ENCODE measurements at regions of chr3 and their contacts with region 1.

Region 1: DNA sequence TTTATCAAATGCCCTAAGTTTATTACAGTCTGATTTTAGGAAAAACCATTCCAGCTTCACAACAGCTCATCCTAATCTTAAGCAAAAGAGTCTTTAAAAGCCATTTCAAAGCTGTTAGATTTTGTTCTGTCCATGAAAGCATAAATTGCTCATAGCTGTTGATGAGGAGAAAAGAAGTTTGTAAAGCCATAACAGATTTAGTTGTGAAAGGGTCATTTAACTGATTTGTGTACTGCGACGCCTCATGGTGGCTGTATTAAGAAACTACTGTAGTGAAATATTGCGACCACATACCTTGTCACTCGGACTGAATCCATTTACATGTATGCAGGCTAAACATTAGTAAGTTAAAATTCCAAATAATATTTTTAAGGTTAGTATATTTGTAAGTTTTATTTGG is 20.9 kb downstream of the BBX start:
- DNase-seq: no peak
- ATAC-seq: peak; percentile 36
- H3K4me3 ChIP-seq: no peak overlapping the region
- H3K4me3 Mint-ChIP-seq: no peak overlapping the region
- H3K27ac ChIP-seq: no peak overlapping the region
- H3K27ac Mint-ChIP-seq: no peak overlapping the region
- H3K4me1 ChIP-seq: peaks cover 0 to 3% of the 10 kb centered on the region in 2 donors
- H3K4me1 Mint-ChIP-seq: peaks cover 5 to 65% (median 51%) of the 10 kb centered on the region in 7 donors
- H3K27me3 ChIP-seq: no peaks in the 10 kb centered on the region
- H3K27me3 Mint-ChIP-seq: no peaks in the 10 kb centered on the region

Region 2: GRCh38 chr3:107271787-107272387 is 271.8 kb before region 1 on chr3:
- CTCF ChIA-PET with region 1: interaction called, 7 read pairs
- POLR2A ChIA-PET with region 1: no interaction called
- intact Hi-C with region 1: loop called (anchors 1 to 5 kb)
- DNase-seq: peak in 6 of 9 donors; percentile 1 to 43 (median 20)
- ATAC-seq: peak; percentile 64
- H3K4me3 ChIP-seq: no peak overlapping the region
- H3K4me3 Mint-ChIP-seq: no peak overlapping the region
- H3K27ac ChIP-seq: no peak overlapping the region
- H3K27ac Mint-ChIP-seq: no peak overlapping the region
- H3K4me1 ChIP-seq: no peaks in the 10 kb centered on the region
- H3K4me1 Mint-ChIP-seq: peaks cover 0 to 2% (median 0%) of the 10 kb centered on the region in 7 donors
- H3K27me3 ChIP-seq: peaks cover 0 to 3% of the 10 kb centered on the region in 2 donors
- H3K27me3 Mint-ChIP-seq: peaks cover 6 to 42% (median 25%) of the 10 kb centered on the region in 5 donors

Region 3: GRCh38 chr3:107283948-107284347 is 259.7 kb before region 1 on chr3:
- CTCF ChIA-PET with region 1: no interaction called
- POLR2A ChIA-PET with region 1: no interaction called
- intact Hi-C with region 1: no loop called
- DNase-seq: no peak
- ATAC-seq: no peak
- H3K4me3 ChIP-seq: no peak overlapping the region
- H3K4me3 Mint-ChIP-seq: no peak overlapping the region
- H3K27ac ChIP-seq: no peak overlapping the region
- H3K27ac Mint-ChIP-seq: no peak overlapping the region
- H3K4me1 ChIP-seq: no peaks in the 10 kb centered on the region
- H3K4me1 Mint-ChIP-seq: peaks cover 0 to 10% (median 0%) of the 10 kb centered on the region in 7 donors
- H3K27me3 ChIP-seq: no peaks in the 10 kb centered on the region
- H3K27me3 Mint-ChIP-seq: peaks cover 0 to 35% (median 9%) of the 10 kb centered on the region in 5 donors

Region 4: GRCh38 chr3:107531917-107532469 is 11.7 kb before region 1 on chr3:
- CTCF ChIA-PET with region 1: interaction called, 3 read pairs
- POLR2A ChIA-PET with region 1: no interaction called
- intact Hi-C with region 1: loop called in 1 of 2 experiments (anchors 1 kb)
- DNase-seq: no peak
- ATAC-seq: no peak
- H3K4me3 ChIP-seq: no peak overlapping the region
- H3K4me3 Mint-ChIP-seq: no peak overlapping the region
- H3K27ac ChIP-seq: no peak overlapping the region
- H3K27ac Mint-ChIP-seq: peak overlapping the region in 1 of 9 donors; percentile 27
- H3K4me1 ChIP-seq: no peaks in the 10 kb centered on the region
- H3K4me1 Mint-ChIP-seq: peaks cover 6 to 76% (median 52%) of the 10 kb centered on the region in 7 donors
- H3K27me3 ChIP-seq: no peaks in the 10 kb centered on the region
- H3K27me3 Mint-ChIP-seq: peaks cover 0 to under 1% (median 0%) of the 10 kb centered on the region in 5 donors

Region 5: DNA sequence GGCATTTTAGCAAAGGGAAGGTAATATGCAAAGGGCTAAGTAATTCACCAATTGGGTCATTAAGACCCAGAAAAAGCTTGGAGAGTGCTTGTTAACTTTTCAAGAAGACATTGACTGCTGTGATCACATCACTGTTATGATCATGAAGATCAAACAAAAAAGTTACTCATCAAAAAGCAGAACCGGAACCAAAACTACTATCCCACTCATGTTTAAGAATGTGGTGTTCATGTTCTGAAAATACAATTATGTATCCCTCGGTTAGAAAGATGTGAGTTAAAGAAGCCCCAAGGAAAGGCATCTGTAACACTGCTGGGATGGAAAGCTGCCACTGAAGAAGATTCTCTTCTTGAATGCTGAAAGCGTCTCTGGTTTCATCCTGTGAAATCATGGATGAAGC is 11.7 kb after region 1 on chr3:
- CTCF ChIA-PET with region 1: interaction called, 3 read pairs
- POLR2A ChIA-PET with region 1: no interaction called
- intact Hi-C with region 1: loop called in 1 of 2 experiments (anchors 2 kb)
- DNase-seq: no peak
- ATAC-seq: no peak
- H3K4me3 ChIP-seq: no peak overlapping the region
- H3K4me3 Mint-ChIP-seq: no peak overlapping the region
- H3K27ac ChIP-seq: no peak overlapping the region
- H3K27ac Mint-ChIP-seq: no peak overlapping the region
- H3K4me1 ChIP-seq: no peaks in the 10 kb centered on the region
- H3K4me1 Mint-ChIP-seq: peaks cover 4 to 73% (median 47%) of the 10 kb centered on the region in 7 donors
- H3K27me3 ChIP-seq: no peaks in the 10 kb centered on the region
- H3K27me3 Mint-ChIP-seq: no peaks in the 10 kb centered on the region

Measured in naive thymus-derived CD4-positive, alpha-beta T cell (primary cell).